Gastrocnemius medialis (tissue), 4 donors: ENCODE measurements at regions of chr12 and their contacts with region 1.

Region 1: DNA sequence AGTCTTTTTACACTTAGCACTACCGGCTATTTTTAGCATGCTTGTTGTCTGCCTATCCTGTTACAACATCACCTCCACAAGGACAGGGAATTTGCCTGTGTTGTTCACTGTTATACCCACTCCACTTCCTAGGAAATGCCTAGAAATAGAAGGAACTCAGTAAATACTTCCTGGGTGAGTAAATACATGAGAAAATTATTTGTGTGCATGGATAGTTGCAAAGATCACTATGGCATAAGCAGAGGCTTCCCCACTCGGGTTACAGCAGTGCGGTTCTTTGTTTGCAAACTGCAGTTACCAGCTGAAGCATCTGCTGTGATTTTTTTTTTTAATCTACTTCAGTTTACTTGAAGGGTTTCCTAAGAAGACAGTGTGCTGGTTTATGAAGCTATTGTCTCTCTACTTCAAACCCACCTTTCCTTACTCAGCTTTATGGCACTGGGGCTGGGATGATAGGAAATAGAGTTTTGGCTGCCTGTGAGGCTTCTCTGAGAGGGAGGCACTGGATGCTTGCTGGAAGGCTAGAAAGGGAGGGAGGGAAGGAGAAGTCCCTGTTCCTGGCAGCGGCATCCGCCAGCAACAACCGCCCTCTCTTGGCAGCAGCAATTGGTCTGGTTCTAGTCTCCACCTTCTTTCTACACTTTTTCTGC is 29.0 kb downstream of the PDE6H start:
- DNase-seq: peak; percentile 12 to 21
- ATAC-seq: peak; percentile 85 to 86
- H3K4me3 ChIP-seq: peak overlapping the region; percentile 19 to 26 (median 21)
- H3K27ac ChIP-seq: peak overlapping the region; percentile 58 to 68 (median 64)
- H3K4me1 ChIP-seq: peaks cover 24% of the 10 kb centered on the region in 2 donors
- H3K27me3 ChIP-seq: no peaks in the 10 kb centered on the region
- CTCF ChIP-seq: no peak
- POLR2A ChIP-seq: no peak

Region 2: DNA sequence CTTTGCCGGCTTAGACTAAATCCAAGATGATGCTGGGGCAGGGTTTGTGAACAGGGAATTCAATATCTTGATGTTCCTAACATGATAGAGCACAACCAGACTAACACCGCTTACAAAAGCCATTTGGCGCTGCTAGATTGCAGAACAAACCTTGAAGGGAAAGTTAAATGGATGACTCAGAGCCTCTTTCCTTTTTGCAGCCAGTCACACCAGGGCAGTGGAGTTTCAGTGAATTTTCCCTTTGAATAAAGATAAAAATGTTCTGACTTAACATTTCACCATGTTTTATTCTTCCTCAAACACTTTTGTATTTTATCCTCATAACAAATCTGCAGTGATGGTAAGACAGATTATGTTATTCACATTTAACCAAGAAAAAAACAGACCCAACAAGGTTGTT is 18.3 kb after region 1 on chr12:
- in situ Hi-C with region 1: no loop called
- intact Hi-C with region 1: no loop called
- DNase-seq: no peak
- ATAC-seq: no peak
- H3K4me3 ChIP-seq: no peak overlapping the region
- H3K27ac ChIP-seq: no peak overlapping the region
- H3K4me1 ChIP-seq: no peaks in the 10 kb centered on the region
- H3K27me3 ChIP-seq: no peaks in the 10 kb centered on the region
- CTCF ChIP-seq: no peak
- POLR2A ChIP-seq: no peak

Region 3: GRCh38 chr12:15122344-15122743 is 120.5 kb after region 1 on chr12:
- in situ Hi-C with region 1: no loop called
- intact Hi-C with region 1: loop called (anchors 10 kb)
- DNase-seq: no peak
- ATAC-seq: peak; percentile 21 to 42
- H3K4me3 ChIP-seq: no peak overlapping the region
- H3K27ac ChIP-seq: no peak overlapping the region
- H3K4me1 ChIP-seq: peaks cover 0 to 3% of the 10 kb centered on the region in 2 donors
- H3K27me3 ChIP-seq: no peaks in the 10 kb centered on the region
- CTCF ChIP-seq: no peak
- POLR2A ChIP-seq: no peak

Region 4: GRCh38 chr12:15220994-15221885 is 219.4 kb after region 1 on chr12 and contains the start of gene RERG:
- in situ Hi-C with region 1: no loop called
- intact Hi-C with region 1: loop called (anchors 10 kb)
- DNase-seq: peak; percentile 48 to 52
- ATAC-seq: peak; percentile 89 to 97
- H3K4me3 ChIP-seq: peak within 1 kb of the TSS; percentile 54 to 60 (median 56)
- H3K27ac ChIP-seq: peak within 1 kb of the TSS; percentile 63 to 71 (median 70)
- H3K4me1 ChIP-seq: peaks cover 5 to 7% of the 10 kb centered on the region in 2 donors
- H3K27me3 ChIP-seq: no peaks in the 10 kb centered on the region
- CTCF ChIP-seq: peak; percentile 85 to 96 (median 91)
- POLR2A ChIP-seq: peak in 1 of 2 donors; percentile 22
- total RNA-seq, gene RERG: 4.3 to 6.5 (median 5.8) TPM